CD8-positive, alpha-beta T cell (primary cell): ENCODE measurements at regions of chr10 and their contacts with region 1.

Region 1: DNA sequence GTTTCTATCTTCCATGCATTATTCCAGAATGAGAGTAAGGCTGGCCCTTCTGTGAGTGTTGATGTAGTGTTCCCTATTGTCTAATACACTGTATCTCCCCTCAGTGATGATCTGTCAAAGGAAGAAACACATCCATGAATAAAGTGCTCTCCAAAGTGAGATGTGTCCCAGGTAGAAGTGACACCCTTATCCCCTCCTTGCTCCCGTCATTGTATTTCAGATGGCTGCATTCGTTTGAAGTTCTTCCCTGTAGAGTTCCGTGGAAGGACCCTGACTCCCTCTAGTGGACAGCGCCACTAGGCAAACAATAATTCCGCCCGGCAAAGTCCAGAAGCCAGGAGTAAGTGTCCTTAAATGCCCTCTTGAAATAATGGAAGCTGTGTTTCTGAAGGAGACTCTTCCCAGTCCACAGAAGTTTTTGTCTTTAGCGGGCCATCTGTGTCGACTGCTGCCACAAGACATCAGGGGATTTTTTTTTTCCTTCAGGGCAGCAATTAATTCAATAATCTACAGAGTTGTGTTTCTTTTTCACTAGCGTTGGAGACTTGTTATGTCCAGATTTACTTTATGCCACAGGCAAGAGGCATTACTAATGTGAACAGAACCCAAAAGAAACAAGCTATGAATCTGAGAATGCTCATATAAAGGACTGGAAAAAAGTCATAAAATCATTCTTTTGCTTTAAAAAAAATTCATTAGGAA is 64.6 kb downstream of the THNSL1 start:
- DNase-seq: peak; percentile 15 to 73 (median 60)
- ATAC-seq: peak; percentile 51
- H3K4me3 ChIP-seq: no peak overlapping the region
- H3K4me3 Mint-ChIP-seq: no peak overlapping the region
- H3K27ac ChIP-seq: no peak overlapping the region
- H3K27ac Mint-ChIP-seq: no peak overlapping the region
- H3K4me1 ChIP-seq: no peaks in the 10 kb centered on the region
- H3K4me1 Mint-ChIP-seq: peaks cover 3% of the 10 kb centered on the region
- H3K27me3 ChIP-seq: no peaks in the 10 kb centered on the region
- H3K27me3 Mint-ChIP-seq: peaks cover 7% of the 10 kb centered on the region
- CTCF ChIP-seq: peak; percentile 71

Region 2: DNA sequence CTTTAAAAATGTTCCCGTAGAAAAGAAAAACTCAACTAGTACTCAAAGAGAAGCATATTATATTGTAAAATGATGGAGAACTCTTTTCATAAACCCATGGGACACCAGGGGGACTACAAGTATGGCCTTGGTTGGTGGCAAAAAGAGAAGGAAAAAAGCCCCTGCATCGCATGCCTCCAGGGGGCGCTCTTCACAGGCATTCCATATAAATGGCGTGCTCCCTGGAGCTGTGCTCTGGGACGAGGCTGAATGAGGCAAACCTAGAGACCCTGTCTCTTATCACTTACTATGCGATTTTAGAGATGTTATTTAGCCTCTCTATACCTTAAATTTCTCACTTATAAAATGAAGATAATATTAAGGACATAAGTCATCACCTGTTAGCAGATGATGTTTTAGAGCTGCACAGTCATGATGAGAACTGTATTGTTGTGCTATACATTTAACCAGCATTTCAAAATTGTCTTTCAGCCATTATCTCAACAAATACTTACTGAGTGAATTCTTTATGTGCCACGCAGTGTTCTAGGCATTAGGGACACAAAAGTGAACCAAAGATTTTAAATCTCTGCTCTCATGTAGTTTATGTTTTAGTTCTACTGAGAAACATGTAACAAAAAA is 463.1 kb before region 1 on chr10:
- CTCF ChIA-PET with region 1: interaction called, 13 read pairs
- POLR2A ChIA-PET with region 1: no interaction called
- intact Hi-C with region 1: no loop called
- DNase-seq: peak in 7 of 9 experiments; percentile 3 to 72 (median 50)
- ATAC-seq: no peak
- H3K4me3 ChIP-seq: no peak overlapping the region
- H3K4me3 Mint-ChIP-seq: no peak overlapping the region
- H3K27ac ChIP-seq: no peak overlapping the region
- H3K27ac Mint-ChIP-seq: peak overlapping the region; percentile 58
- H3K4me1 ChIP-seq: peaks cover 9% of the 10 kb centered on the region
- H3K4me1 Mint-ChIP-seq: peaks cover 29% of the 10 kb centered on the region
- H3K27me3 ChIP-seq: no peaks in the 10 kb centered on the region
- H3K27me3 Mint-ChIP-seq: no peaks in the 10 kb centered on the region
- CTCF ChIP-seq: peak; percentile 67

Region 3: DNA sequence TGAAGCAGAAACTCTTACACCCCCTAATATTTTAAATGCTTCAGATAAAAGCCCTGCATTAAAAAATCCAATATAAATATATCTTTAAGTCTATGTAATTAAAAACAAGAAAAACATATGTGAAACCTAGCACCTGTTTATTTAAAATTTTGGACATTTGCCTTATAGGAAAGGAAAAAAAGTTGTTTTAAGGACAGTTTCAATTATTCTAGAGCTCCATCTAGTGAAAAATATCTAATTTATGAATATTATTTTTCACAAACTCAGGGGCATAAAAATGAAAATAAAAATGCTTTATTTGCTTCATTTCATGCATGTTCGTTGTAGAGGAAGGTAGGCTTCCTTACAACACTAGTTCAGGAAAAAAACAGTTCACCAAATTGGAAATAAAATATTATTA is 91.2 kb before region 1 on chr10:
- CTCF ChIA-PET with region 1: interaction called, 3 read pairs
- POLR2A ChIA-PET with region 1: no interaction called
- intact Hi-C with region 1: loop called in 1 of 2 experiments (anchors 5 kb)
- DNase-seq: no peak
- ATAC-seq: no peak
- H3K4me3 ChIP-seq: no peak overlapping the region
- H3K4me3 Mint-ChIP-seq: no peak overlapping the region
- H3K27ac ChIP-seq: no peak overlapping the region
- H3K27ac Mint-ChIP-seq: no peak overlapping the region
- H3K4me1 ChIP-seq: no peaks in the 10 kb centered on the region
- H3K4me1 Mint-ChIP-seq: no peaks in the 10 kb centered on the region
- H3K27me3 ChIP-seq: no peaks in the 10 kb centered on the region
- H3K27me3 Mint-ChIP-seq: no peaks in the 10 kb centered on the region
- CTCF ChIP-seq: no peak

Region 4: GRCh38 chr10:25068152-25069058 is 12.6 kb before region 1 on chr10:
- CTCF ChIA-PET with region 1: interaction called, 13 read pairs
- POLR2A ChIA-PET with region 1: no interaction called
- intact Hi-C with region 1: no loop called
- DNase-seq: no peak
- ATAC-seq: no peak
- H3K4me3 ChIP-seq: no peak overlapping the region
- H3K4me3 Mint-ChIP-seq: no peak overlapping the region
- H3K27ac ChIP-seq: no peak overlapping the region
- H3K27ac Mint-ChIP-seq: no peak overlapping the region
- H3K4me1 ChIP-seq: no peaks in the 10 kb centered on the region
- H3K4me1 Mint-ChIP-seq: peaks cover 5% of the 10 kb centered on the region
- H3K27me3 ChIP-seq: no peaks in the 10 kb centered on the region
- H3K27me3 Mint-ChIP-seq: peaks cover under 1% of the 10 kb centered on the region
- CTCF ChIP-seq: no peak

Region 5: DNA sequence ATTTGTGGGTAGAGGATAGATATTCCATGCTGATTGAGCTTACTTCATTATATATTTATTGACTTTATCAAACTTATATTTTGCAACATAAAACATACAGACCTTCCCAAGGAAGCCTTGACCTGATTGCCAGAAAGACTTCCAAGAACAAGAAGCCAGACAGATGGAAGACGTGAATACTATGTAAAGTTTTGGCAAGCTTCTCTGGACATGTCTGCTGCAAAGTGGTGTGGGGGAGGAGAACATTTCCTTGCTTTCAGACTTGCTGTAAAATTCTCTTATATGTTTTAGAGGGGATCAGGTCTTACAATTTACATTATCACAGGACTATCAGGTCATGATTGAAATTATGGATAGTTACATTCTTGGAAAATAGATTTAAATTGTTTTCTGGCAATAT is 117.1 kb after region 1 on chr10:
- CTCF ChIA-PET with region 1: no interaction called
- POLR2A ChIA-PET with region 1: no interaction called
- intact Hi-C with region 1: no loop called
- DNase-seq: no peak
- ATAC-seq: no peak
- H3K4me3 ChIP-seq: no peak overlapping the region
- H3K4me3 Mint-ChIP-seq: no peak overlapping the region
- H3K27ac ChIP-seq: no peak overlapping the region
- H3K27ac Mint-ChIP-seq: no peak overlapping the region
- H3K4me1 ChIP-seq: no peaks in the 10 kb centered on the region
- H3K4me1 Mint-ChIP-seq: no peaks in the 10 kb centered on the region
- H3K27me3 ChIP-seq: no peaks in the 10 kb centered on the region
- H3K27me3 Mint-ChIP-seq: peaks cover 6% of the 10 kb centered on the region
- CTCF ChIP-seq: no peak